CD4-positive, alpha-beta memory T cell (primary cell): ENCODE measurements at regions of chr14 and their contacts with region 1.

Region 1: GRCh38 chr14:91060351-91061055 is at the start of gene RPS6KA5:
- DNase-seq: peak; percentile 99 to 100 (median 100)
- H3K4me3 ChIP-seq: peak within 1 kb of the TSS; percentile 17 to 78
- H3K4me3 Mint-ChIP-seq: peak within 1 kb of the TSS; percentile 87 to 90 (median 88)
- H3K27ac ChIP-seq: peak within 1 kb of the TSS; percentile 63
- H3K27ac Mint-ChIP-seq: peak within 1 kb of the TSS; percentile 73 to 90 (median 80)
- H3K4me1 ChIP-seq: peaks cover 67% of the 10 kb centered on the region
- H3K4me1 Mint-ChIP-seq: peaks cover 44 to 72% (median 57%) of the 10 kb centered on the region in 4 donors
- H3K27me3 ChIP-seq: no peaks in the 10 kb centered on the region
- H3K27me3 Mint-ChIP-seq: no peaks in the 10 kb centered on the region
- total RNA-seq, gene RPS6KA5: 42.9 to 44.7 TPM

Region 2: GRCh38 chr14:90399541-90400444 is 660.7 kb before region 1 on chr14:
- CTCF ChIA-PET with region 1: no interaction called
- POLR2A ChIA-PET with region 1: interaction called, 3 read pairs
- intact Hi-C with region 1: loop called (anchors 5 kb)
- DNase-seq: peak; percentile 83 to 91 (median 87)
- H3K4me3 ChIP-seq: peak overlapping the region; percentile 71 to 88
- H3K4me3 Mint-ChIP-seq: peak overlapping the region; percentile 95 to 99 (median 98)
- H3K27ac ChIP-seq: peak overlapping the region; percentile 87
- H3K27ac Mint-ChIP-seq: peak overlapping the region; percentile 98 to 99 (median 99)
- H3K4me1 ChIP-seq: peaks cover 59% of the 10 kb centered on the region
- H3K4me1 Mint-ChIP-seq: peaks cover 34 to 70% (median 53%) of the 10 kb centered on the region in 4 donors
- H3K27me3 ChIP-seq: no peaks in the 10 kb centered on the region
- H3K27me3 Mint-ChIP-seq: peaks cover 0 to 5% of the 10 kb centered on the region in 2 donors

Region 3: DNA sequence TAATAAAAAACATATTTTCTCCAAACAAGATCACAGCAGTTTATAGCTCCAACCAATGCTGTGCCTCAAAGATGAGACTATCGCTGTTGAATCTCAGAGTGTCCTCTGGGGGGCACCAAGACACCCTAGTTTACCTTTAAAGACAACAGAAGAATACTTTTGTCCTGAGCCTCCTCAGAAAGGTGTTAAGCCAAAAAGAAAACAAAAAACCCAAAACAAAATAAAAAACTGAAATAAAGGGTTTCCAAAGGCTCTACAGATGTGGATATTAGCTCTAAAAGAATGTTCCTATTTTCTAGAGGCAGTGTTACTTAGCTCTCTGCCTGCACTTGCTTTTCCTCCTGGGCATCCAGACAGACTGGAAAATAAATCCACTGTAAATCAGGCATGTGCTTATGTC is 157.4 kb before region 1 on chr14:
- CTCF ChIA-PET with region 1: interaction called, 9 read pairs
- POLR2A ChIA-PET with region 1: no interaction called
- intact Hi-C with region 1: loop called (anchors 5 kb)
- DNase-seq: peak; percentile 58 to 63 (median 61)
- H3K4me3 ChIP-seq: no peak overlapping the region
- H3K4me3 Mint-ChIP-seq: no peak overlapping the region
- H3K27ac ChIP-seq: no peak overlapping the region
- H3K27ac Mint-ChIP-seq: peak overlapping the region in 1 of 7 donors; percentile 6
- H3K4me1 ChIP-seq: no peaks in the 10 kb centered on the region
- H3K4me1 Mint-ChIP-seq: peaks cover 0 to 9% (median 3%) of the 10 kb centered on the region in 4 donors
- H3K27me3 ChIP-seq: no peaks in the 10 kb centered on the region
- H3K27me3 Mint-ChIP-seq: no peaks in the 10 kb centered on the region

Region 4: GRCh38 chr14:91009501-91010152 is 50.9 kb before region 1 on chr14:
- CTCF ChIA-PET with region 1: no interaction called
- POLR2A ChIA-PET with region 1: no interaction called
- intact Hi-C with region 1: no loop called
- DNase-seq: peak in 1 of 5 donors; percentile 13
- H3K4me3 ChIP-seq: no peak overlapping the region
- H3K4me3 Mint-ChIP-seq: peak overlapping the region in 6 of 8 donors; percentile 6 to 62 (median 25)
- H3K27ac ChIP-seq: no peak overlapping the region
- H3K27ac Mint-ChIP-seq: peak overlapping the region in 1 of 7 donors; percentile 1
- H3K4me1 ChIP-seq: peaks cover 33% of the 10 kb centered on the region
- H3K4me1 Mint-ChIP-seq: peaks cover 27 to 51% (median 42%) of the 10 kb centered on the region in 4 donors
- H3K27me3 ChIP-seq: no peaks in the 10 kb centered on the region
- H3K27me3 Mint-ChIP-seq: no peaks in the 10 kb centered on the region

Region 5: GRCh38 chr14:91078095-91078737 is 17.7 kb after region 1 on chr14:
- CTCF ChIA-PET with region 1: interaction called, 16 read pairs
- POLR2A ChIA-PET with region 1: interaction called, 70 read pairs
- intact Hi-C with region 1: loop called (anchors 1 kb)
- DNase-seq: peak; percentile 68 to 87 (median 82)
- H3K4me3 ChIP-seq: no peak overlapping the region
- H3K4me3 Mint-ChIP-seq: peak overlapping the region; percentile 58 to 75 (median 64)
- H3K27ac ChIP-seq: no peak overlapping the region
- H3K27ac Mint-ChIP-seq: peak overlapping the region; percentile 79 to 91 (median 89)
- H3K4me1 ChIP-seq: peaks cover 33% of the 10 kb centered on the region
- H3K4me1 Mint-ChIP-seq: peaks cover 23 to 48% (median 32%) of the 10 kb centered on the region in 4 donors
- H3K27me3 ChIP-seq: no peaks in the 10 kb centered on the region
- H3K27me3 Mint-ChIP-seq: no peaks in the 10 kb centered on the region

Region 6: GRCh38 chr14:91138511-91139359 is 78.2 kb after region 1 on chr14:
- CTCF ChIA-PET with region 1: interaction called, 14 read pairs
- POLR2A ChIA-PET with region 1: interaction called, 13 read pairs
- intact Hi-C with region 1: loop called (anchors 1 kb)
- DNase-seq: peak; percentile 40 to 53 (median 48)
- H3K4me3 ChIP-seq: no peak overlapping the region
- H3K4me3 Mint-ChIP-seq: no peak overlapping the region
- H3K27ac ChIP-seq: no peak overlapping the region
- H3K27ac Mint-ChIP-seq: peak overlapping the region in 4 of 7 donors; percentile 13 to 64 (median 60)
- H3K4me1 ChIP-seq: peaks cover 20% of the 10 kb centered on the region
- H3K4me1 Mint-ChIP-seq: peaks cover 23 to 45% (median 37%) of the 10 kb centered on the region in 4 donors
- H3K27me3 ChIP-seq: no peaks in the 10 kb centered on the region
- H3K27me3 Mint-ChIP-seq: no peaks in the 10 kb centered on the region

Region 7: DNA sequence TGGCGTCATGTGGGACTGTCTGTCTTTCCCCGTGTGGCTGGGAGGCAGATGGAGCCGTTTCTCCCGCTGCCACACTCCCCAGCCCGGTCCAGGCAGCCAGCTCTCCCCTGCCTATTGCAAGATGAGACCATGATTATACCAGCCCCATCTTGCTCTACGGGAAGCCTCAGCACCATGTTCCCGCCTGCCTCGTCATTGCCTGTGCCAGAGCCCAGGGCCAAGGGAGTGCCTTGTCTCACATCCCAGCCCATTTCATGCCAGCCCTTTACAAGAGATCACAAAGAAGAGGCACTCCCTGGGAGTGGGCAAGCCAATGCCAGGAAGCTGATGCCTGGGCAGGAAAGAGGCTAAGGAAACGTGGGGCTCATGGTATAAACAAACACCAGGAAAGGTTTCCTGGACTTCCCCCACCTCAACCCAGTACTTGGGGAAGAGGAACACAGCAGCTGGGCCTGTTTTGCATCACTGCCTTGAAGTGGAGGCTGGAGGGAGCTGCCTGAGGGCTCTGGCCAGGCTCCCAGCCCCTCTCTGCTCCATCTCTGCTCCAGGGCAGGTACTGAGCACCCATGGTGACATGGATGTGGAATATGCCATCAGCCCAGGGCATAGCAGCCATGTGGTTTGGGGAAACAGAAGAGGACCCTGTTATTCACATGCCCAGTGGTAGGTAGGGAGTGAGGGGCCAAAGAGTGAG is 160.2 kb after region 1 on chr14:
- CTCF ChIA-PET with region 1: no interaction called
- POLR2A ChIA-PET with region 1: no interaction called
- intact Hi-C with region 1: no loop called
- DNase-seq: no peak
- H3K4me3 ChIP-seq: no peak overlapping the region
- H3K4me3 Mint-ChIP-seq: peak overlapping the region in 1 of 8 donors; percentile 17
- H3K27ac ChIP-seq: no peak overlapping the region
- H3K27ac Mint-ChIP-seq: peak overlapping the region in 6 of 7 donors; percentile 7 to 72 (median 60)
- H3K4me1 ChIP-seq: peaks cover 43% of the 10 kb centered on the region
- H3K4me1 Mint-ChIP-seq: peaks cover 41 to 67% (median 53%) of the 10 kb centered on the region in 4 donors
- H3K27me3 ChIP-seq: no peaks in the 10 kb centered on the region
- H3K27me3 Mint-ChIP-seq: no peaks in the 10 kb centered on the region

Region 8: DNA sequence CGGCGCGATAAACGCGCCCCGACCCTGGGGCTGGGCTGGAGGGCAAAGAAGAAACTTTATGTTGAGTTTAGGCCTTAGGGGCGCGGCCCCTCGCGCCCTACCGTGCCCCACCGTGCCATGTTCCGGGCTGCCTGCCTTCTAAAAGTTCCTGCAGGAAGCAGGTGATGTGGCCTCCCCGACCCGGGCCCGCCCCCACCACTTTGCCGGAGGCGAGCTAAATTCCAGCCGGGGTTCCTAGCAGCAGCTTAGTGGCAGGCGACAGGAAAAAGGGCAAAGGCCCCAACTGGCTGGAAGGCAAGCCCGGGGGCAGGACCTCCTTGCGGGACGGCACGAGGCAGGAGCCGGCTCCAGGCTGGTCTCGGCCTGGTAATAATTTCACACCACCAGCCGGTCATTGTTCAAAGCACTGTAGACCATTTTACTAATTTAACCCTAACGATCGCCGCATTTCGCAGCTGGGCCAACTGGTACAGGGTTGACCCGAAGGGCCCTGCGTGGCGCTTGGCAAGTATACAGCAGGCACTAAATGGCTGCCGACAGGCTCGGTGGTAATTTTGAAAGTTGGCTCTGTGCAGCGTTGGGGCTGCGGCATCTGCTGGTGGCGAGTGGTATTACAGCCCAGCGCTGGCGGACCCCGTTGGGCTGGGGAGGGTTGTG is 358.0 kb after region 1 on chr14:
- CTCF ChIA-PET with region 1: interaction called, 3 read pairs
- POLR2A ChIA-PET with region 1: interaction called, 3 read pairs
- intact Hi-C with region 1: loop called (anchors 1 kb)
- DNase-seq: peak; percentile 82 to 86 (median 84)
- H3K4me3 ChIP-seq: peak overlapping the region; percentile 46 to 52
- H3K4me3 Mint-ChIP-seq: peak overlapping the region; percentile 76 to 95 (median 84)
- H3K27ac ChIP-seq: peak overlapping the region; percentile 67
- H3K27ac Mint-ChIP-seq: peak overlapping the region; percentile 90 to 100 (median 95)
- H3K4me1 ChIP-seq: peaks cover 32% of the 10 kb centered on the region
- H3K4me1 Mint-ChIP-seq: peaks cover 23 to 56% (median 33%) of the 10 kb centered on the region in 4 donors
- H3K27me3 ChIP-seq: no peaks in the 10 kb centered on the region
- H3K27me3 Mint-ChIP-seq: peaks cover 0 to 1% of the 10 kb centered on the region in 2 donors